Right cardiac atrium (tissue), 5 donors: ENCODE measurements at regions of chr20 and their contacts with region 1.

Region 1: GRCh38 chr20:63973636-63974402 is 4.1 kb upstream of the ZNF512B start:
- DNase-seq: peak; percentile 92 to 96 (median 96)
- ATAC-seq: peak; percentile 82 to 86
- H3K4me3 ChIP-seq: peak overlapping the region; percentile 47
- H3K27ac ChIP-seq: peak overlapping the region; percentile 30
- H3K4me1 ChIP-seq: peaks cover 5% of the 10 kb centered on the region
- H3K27me3 ChIP-seq: no peaks in the 10 kb centered on the region

Region 2: DNA sequence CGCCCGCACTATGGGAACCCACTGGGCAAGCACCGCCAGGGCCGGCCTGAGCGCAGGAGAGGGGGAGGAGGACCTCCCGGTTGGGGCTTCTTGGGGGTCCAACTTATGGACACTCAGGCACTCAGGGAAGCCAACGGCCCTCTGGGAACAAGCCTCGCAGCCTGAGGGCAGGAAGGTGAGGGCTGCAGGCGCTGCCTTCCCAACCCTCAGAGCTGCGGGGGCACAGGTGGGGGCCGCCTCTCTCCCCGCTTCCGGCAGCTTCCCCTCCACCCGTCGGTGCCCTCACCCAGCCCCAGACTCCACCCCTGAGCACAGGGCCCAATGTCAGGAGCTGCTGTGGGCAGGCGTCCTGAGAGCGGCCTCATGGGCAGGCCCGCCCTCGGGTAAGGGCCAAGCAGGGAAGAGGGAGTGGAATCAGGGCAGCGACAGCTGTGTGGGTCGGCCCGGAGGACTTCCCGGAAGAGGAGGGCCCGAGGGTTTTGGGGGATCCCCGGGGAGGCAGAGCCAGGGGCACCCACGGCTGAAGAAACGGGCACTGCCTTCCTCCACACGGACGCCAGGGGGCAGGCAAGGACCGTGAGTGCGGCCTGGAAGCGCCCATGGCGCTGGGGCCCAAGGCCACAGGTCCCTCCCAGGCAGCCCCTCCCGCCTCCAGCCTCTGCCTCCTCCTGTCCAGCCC is 436.2 kb before region 1 on chr20:
- intact Hi-C with region 1: loop called (anchors 2 to 10 kb)
- DNase-seq: peak; percentile 88 to 94 (median 93)
- ATAC-seq: peak; percentile 86 to 90
- H3K4me3 ChIP-seq: no peak overlapping the region
- H3K27ac ChIP-seq: no peak overlapping the region
- H3K4me1 ChIP-seq: no peaks in the 10 kb centered on the region
- H3K27me3 ChIP-seq: no peaks in the 10 kb centered on the region

Region 3: GRCh38 chr20:63657937-63658748 is 315.7 kb before region 1 on chr20 and contains the start of gene RTEL1:
- intact Hi-C with region 1: loop called in 1 of 4 experiments (anchors 10 kb)
- DNase-seq: peak; percentile 94 to 98 (median 97)
- ATAC-seq: peak; percentile 96
- H3K4me3 ChIP-seq: peak within 1 kb of the TSS; percentile 80
- H3K27ac ChIP-seq: peak within 1 kb of the TSS; percentile 76
- H3K4me1 ChIP-seq: peaks cover 6% of the 10 kb centered on the region
- H3K27me3 ChIP-seq: no peaks in the 10 kb centered on the region
- total RNA-seq, gene RTEL1: 12.3 to 14.8 (median 13.3) TPM

Region 4: DNA sequence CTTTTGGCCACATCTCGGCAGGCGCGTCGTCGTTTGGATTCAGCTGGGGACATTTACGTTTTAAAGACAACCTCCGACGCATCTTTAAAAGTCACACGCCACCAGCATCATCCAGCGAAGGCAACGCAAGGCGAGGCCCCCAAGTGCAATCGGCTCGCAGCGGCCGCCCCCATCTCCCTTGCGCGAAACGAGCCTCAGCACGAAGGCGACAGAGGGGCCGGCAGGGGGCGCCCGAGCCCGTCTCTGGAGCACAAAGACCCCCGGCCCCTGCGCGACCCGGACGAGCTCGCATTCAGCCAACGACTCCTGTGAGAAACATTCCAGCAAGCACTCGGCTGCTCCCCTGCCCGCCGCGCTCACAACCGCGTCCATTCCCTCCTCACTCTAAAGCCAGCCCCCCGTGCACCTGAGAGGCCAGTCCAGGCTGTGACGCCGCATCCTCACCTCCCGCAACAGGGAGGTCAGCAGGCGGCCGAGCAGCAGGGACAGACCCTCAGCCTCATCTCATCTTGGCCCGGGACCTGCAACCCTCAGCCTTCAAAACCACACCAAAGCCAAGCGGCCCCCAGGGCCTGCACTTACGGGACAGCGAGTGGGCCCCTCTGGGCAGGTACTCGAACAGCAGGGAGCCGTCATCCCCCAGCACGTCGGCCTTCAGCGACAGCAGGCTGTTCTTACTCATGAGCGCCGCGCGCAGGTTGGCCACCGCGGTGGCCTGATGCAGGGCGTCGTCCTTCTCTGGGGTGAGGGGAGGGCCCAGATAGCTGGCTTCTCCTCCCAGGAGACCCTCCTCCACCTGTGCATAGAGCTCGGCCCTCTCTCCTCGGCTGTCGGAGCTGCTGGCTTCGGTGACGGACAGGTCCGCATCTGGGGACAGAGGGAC is 198.5 kb before region 1 on chr20:
- intact Hi-C with region 1: loop called in 1 of 4 experiments (anchors 10 kb)
- DNase-seq: peak; percentile 58 to 85 (median 85)
- ATAC-seq: peak; percentile 41 to 44
- H3K4me3 ChIP-seq: no peak overlapping the region
- H3K27ac ChIP-seq: no peak overlapping the region
- H3K4me1 ChIP-seq: no peaks in the 10 kb centered on the region
- H3K27me3 ChIP-seq: no peaks in the 10 kb centered on the region

Region 5: GRCh38 chr20:63830841-63831588 is 142.8 kb before region 1 on chr20 and contains the start of gene ZBTB46:
- intact Hi-C with region 1: no loop called
- DNase-seq: peak; percentile 76 to 90 (median 89)
- ATAC-seq: peak in 1 of 2 donors; percentile 25
- H3K4me3 ChIP-seq: peak within 1 kb of the TSS; percentile 94
- H3K27ac ChIP-seq: peak within 1 kb of the TSS; percentile 69
- H3K4me1 ChIP-seq: peaks cover 10% of the 10 kb centered on the region
- H3K27me3 ChIP-seq: no peaks in the 10 kb centered on the region
- total RNA-seq, gene ZBTB46: 14.4 to 18.1 (median 16.3) TPM

Region 6: DNA sequence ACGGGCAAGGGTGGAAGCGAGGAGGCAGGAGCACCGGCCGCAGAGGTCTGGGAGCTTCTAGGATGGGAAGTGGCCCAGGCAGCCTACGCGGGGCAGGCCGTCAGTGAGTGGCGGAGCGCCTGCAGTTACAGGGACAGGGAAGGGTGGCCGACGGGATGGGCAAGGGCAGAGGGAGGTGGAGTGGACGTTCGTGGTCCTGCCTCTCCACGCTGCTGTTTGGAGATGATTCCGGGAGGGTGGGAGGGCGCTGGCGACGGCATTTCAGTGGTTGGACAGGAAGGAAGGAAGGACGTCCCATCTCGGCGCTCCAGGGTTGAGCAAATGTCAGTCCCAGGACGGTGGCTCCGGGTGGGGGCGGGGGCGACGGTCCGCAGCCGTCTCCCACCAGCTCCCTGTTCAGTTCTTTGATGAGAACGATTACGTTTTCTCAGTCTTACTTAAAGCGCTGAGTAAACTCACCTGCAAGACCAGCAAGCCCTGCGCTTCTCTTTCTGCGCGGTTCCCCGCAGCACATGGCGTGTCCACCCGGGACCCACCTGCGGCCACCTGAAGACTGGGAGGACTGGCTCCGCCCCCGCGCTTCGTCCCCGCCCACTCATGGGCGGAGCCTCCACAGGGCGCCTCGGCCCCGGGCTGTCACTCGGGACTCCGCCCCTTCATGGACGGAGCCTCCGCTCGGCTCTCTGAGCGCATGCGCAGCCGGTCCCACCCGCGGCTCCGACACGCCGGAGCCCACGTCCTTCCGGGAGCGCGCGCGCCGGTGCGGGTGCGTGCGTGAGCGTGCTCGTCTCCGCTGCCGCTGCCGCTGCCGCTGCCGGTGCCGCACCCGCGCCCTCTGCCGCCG is 79.2 kb before region 1 on chr20 and contains the start of gene DNAJC5:
- intact Hi-C with region 1: loop called in 1 of 4 experiments (anchors 10 kb)
- DNase-seq: peak; percentile 97 to 99 (median 99)
- ATAC-seq: peak; percentile 95
- H3K4me3 ChIP-seq: peak within 1 kb of the TSS; percentile 99
- H3K27ac ChIP-seq: peak within 1 kb of the TSS; percentile 75
- H3K4me1 ChIP-seq: peaks cover 12% of the 10 kb centered on the region
- H3K27me3 ChIP-seq: no peaks in the 10 kb centered on the region
- total RNA-seq, gene DNAJC5: 43.1 to 51.0 (median 49.9) TPM

Region 7: DNA sequence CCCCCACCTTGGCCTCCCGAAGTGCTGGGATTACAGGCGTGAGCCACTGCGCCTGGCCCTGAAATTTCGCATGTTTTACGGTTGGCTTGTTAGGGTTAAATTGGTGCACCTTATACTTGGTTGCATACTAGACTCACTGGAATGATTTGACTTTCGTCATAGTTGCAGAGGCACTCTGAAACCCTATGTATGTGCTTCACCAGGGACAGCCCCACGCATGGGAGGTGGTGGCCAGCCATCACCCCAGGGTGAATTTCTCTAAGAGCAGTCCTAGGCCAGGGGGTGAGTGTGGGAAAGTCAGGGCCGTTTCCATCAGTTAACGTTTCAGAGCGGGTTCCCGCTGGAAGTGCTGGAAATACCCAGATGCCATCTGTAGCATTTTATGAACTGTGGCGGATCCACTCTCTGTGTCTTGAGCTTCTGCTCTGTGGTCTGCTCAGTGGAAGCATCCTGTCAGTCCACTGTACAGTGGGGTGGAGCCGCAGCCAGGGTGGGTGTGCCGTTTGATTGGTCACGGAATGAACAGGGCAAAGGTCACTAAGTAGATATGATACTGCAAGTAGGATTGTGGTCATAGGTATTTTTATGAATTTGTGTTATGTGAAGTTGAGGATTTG is 65.7 kb before region 1 on chr20:
- intact Hi-C with region 1: loop called in 1 of 4 experiments (anchors 10 kb)
- DNase-seq: no peak
- ATAC-seq: peak in 1 of 2 donors; percentile 52
- H3K4me3 ChIP-seq: no peak overlapping the region
- H3K27ac ChIP-seq: no peak overlapping the region
- H3K4me1 ChIP-seq: peaks cover 14% of the 10 kb centered on the region
- H3K27me3 ChIP-seq: no peaks in the 10 kb centered on the region

Region 8: GRCh38 chr20:63930971-63931553 is 42.8 kb before region 1 on chr20:
- intact Hi-C with region 1: no loop called
- DNase-seq: peak; percentile 46 to 87 (median 78)
- ATAC-seq: peak; percentile 60 to 81
- H3K4me3 ChIP-seq: no peak overlapping the region
- H3K27ac ChIP-seq: no peak overlapping the region
- H3K4me1 ChIP-seq: no peaks in the 10 kb centered on the region
- H3K27me3 ChIP-seq: no peaks in the 10 kb centered on the region

Region 9: GRCh38 chr20:64057628-64058498 is 84.0 kb after region 1 on chr20:
- intact Hi-C with region 1: loop called in 1 of 4 experiments (anchors 5 kb)
- DNase-seq: peak; percentile 80 to 91 (median 91)
- ATAC-seq: peak; percentile 42 to 50
- H3K4me3 ChIP-seq: peak overlapping the region; percentile 1
- H3K27ac ChIP-seq: peak overlapping the region; percentile 16
- H3K4me1 ChIP-seq: no peaks in the 10 kb centered on the region
- H3K27me3 ChIP-seq: no peaks in the 10 kb centered on the region